H1 (cell line): ENCODE measurements at regions of chr4 and their contacts with region 1.

Region 1: DNA sequence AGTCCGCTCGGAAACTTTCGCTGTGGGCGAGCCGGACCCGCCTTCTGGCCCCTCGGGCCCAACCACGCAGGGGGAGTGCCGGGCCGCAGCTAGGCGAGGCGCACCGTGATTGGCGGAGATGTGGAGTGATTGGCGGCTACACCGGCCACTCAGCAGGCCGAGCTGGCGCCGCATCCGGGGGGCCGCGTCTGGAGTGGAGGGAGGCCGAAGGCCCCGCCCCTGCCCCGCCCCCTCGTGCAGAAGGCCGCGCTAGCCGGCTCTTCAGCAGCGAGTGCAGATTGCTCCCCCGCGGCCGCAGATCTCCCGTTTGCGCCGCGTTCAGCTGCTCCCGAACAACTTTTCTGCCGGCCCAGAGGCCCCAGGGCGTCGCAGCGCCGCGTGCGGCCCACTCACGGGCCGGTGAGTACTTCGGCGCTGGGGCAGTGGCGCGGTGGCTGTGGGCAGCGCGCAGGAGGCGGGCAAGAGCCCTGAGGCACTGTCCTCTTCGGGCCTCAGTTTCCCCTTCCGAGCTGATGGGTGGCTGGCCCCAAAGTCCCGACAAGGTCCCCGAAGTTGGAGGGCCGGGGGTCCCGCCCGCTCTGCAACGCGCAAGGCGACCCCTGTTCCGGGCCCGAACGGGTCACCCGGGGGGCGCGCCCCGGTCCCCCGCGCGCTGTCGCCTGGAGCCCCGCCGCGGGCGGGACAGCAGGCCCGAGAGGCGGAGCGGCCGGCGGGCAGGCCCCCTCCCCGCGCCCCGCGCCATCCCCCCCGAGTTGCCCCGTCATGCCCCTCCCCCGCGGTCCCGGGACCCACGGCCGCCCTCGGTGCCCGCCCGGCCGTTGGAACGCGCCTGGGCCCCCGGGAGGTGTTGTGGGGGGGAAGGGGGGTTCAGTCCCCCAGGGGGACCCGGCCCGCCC is at the start of gene WFS1:
- DNase-seq: peak; percentile 90 to 98
- H3K4me3 ChIP-seq: peak within 1 kb of the TSS; percentile 49 to 94 (median 74)
- H3K27ac ChIP-seq: no peak within 1 kb of the TSS
- H3K4me1 ChIP-seq: peaks cover 4 to 21% (median 9%) of the 10 kb centered on the region in 4 experiments
- H3K27me3 ChIP-seq: peaks cover 0 to 4% (median 0%) of the 10 kb centered on the region in 4 experiments; a peak in 1 of 7 replicates
- CTCF ChIP-seq: no peak
- EP300 ChIP-seq: no peak
- POLR2A ChIP-seq: peak in 1 of 2 experiments; percentile 63; a peak in 2 of 3 replicates
- RAD21 ChIP-seq: no peak
- total RNA-seq, gene WFS1: 29.1 and 34.0 TPM in 2 replicates

Region 2: GRCh38 chr4:6308899-6309643 is 39.2 kb after region 1 on chr4:
- CTCF ChIA-PET with region 1: interaction called, 11 read pairs
- POLR2A ChIA-PET with region 1: interaction called, 4 read pairs
- DNase-seq: peak in 1 of 2 experiments; percentile 84
- H3K4me3 ChIP-seq: peak overlapping the region in 1 of 4 experiments; percentile 49; a peak in 2 of 8 replicates
- H3K27ac ChIP-seq: no peak overlapping the region
- H3K4me1 ChIP-seq: no peaks in the 10 kb centered on the region
- H3K27me3 ChIP-seq: no peaks in the 10 kb centered on the region; a peak in 1 of 7 replicates
- CTCF ChIP-seq: 0 out of 4 replicates have a peak, but pooled peaks of 1 of the 3 experiments have one; percentile 14
- EP300 ChIP-seq: no peak
- POLR2A ChIP-seq: no peak
- RAD21 ChIP-seq: no peak

Region 3: GRCh38 chr4:6355052-6355451 is 85.2 kb after region 1 on chr4:
- CTCF ChIA-PET with region 1: no interaction called
- POLR2A ChIA-PET with region 1: no interaction called
- DNase-seq: no peak
- H3K4me3 ChIP-seq: no peak overlapping the region
- H3K27ac ChIP-seq: no peak overlapping the region
- H3K4me1 ChIP-seq: no peaks in the 10 kb centered on the region
- H3K27me3 ChIP-seq: 0 out of 7 replicates have a peak, but pooled peaks cover 0 to 2% (median 0%) of the 10 kb centered on the region in 4 experiments
- CTCF ChIP-seq: no peak
- EP300 ChIP-seq: no peak
- POLR2A ChIP-seq: no peak
- RAD21 ChIP-seq: no peak